Activated T-helper 2 cell treated with anti-CD3 and anti-CD28 coated beads, Interferon-gamma antibody, Interleukin-2, Interleukin-4, amounts not matched to agents 10 μg/mL and 5 μg/mL and 100 μg/mL, durations not matched to agents 14 hours and 24 hours and 36 hours (primary cell): ENCODE measurements at regions of chr1 and their contacts with region 1.

Region 1: GRCh38 chr1:67194209-67194863 is 28.1 kb downstream of the IL23R start:
- DNase-seq: no peak
- H3K4me3 Mint-ChIP-seq: no peak overlapping the region
- H3K27ac Mint-ChIP-seq: peak overlapping the region; percentile 60
- H3K4me1 Mint-ChIP-seq: peaks cover 10% of the 10 kb centered on the region
- H3K27me3 Mint-ChIP-seq: no peaks in the 10 kb centered on the region

Region 2: GRCh38 chr1:67162957-67163356 is 31.4 kb before region 1 on chr1:
- intact Hi-C with region 1: loop called (anchors 1 kb)
- DNase-seq: peak; percentile 40
- H3K4me3 Mint-ChIP-seq: no peak overlapping the region
- H3K27ac Mint-ChIP-seq: peak overlapping the region; percentile 58
- H3K4me1 Mint-ChIP-seq: peaks cover 41% of the 10 kb centered on the region
- H3K27me3 Mint-ChIP-seq: no peaks in the 10 kb centered on the region

Region 3: GRCh38 chr1:67214420-67215174 is 20.3 kb after region 1 on chr1:
- intact Hi-C with region 1: loop called (anchors 1 kb)
- DNase-seq: no peak
- H3K4me3 Mint-ChIP-seq: no peak overlapping the region
- H3K27ac Mint-ChIP-seq: no peak overlapping the region
- H3K4me1 Mint-ChIP-seq: peaks cover 32% of the 10 kb centered on the region
- H3K27me3 Mint-ChIP-seq: no peaks in the 10 kb centered on the region

Region 4: DNA sequence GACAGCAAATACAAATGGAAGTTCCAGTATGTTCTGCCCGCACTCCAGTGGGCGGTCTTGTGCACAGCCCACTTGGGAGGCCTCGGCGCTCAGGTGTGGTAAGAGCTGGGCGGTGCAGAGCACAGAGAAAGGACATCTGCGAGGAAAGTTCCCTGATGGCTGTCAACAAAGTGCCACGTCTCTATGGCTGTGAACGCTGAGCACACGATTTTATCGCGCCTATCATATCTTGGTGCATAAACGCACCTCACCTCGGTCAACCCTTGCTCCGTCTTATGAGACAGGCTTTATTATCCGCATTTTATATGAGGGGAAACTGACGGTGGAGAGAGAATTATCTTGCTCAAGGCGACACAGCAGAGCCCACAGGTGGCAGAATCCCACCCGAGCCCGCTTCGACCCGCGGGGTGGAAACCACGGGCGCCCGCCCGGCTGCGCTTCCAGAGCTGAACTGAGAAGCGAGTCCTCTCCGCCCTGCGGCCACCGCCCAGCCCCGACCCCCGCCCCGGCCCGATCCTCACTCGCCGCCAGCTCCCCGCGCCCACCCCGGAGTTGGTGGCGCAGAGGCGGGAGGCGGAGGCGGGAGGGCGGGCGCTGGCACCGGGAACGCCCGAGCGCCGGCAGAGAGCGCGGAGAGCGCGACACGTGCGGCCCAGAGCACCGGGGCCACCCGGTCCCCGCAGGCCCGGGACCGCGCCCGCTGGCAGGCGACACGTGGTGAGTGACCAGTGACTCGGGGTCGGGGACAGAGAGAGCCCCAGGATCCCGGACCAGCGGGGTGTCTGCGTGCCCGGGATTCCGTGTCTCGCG is 113.1 kb after region 1 on chr1 and contains the start of gene IL12RB2:
- intact Hi-C with region 1: no loop called
- DNase-seq: peak; percentile 57
- H3K4me3 Mint-ChIP-seq: peak within 1 kb of the TSS; percentile 94
- H3K27ac Mint-ChIP-seq: peak within 1 kb of the TSS; percentile 95
- H3K4me1 Mint-ChIP-seq: peaks cover 69% of the 10 kb centered on the region
- H3K27me3 Mint-ChIP-seq: no peaks in the 10 kb centered on the region
- total RNA-seq, gene IL12RB2: 108 TPM in 2 replicates